ENCODE measurements at regions of chr13 and their contacts with region 1.

Region 1: DNA sequence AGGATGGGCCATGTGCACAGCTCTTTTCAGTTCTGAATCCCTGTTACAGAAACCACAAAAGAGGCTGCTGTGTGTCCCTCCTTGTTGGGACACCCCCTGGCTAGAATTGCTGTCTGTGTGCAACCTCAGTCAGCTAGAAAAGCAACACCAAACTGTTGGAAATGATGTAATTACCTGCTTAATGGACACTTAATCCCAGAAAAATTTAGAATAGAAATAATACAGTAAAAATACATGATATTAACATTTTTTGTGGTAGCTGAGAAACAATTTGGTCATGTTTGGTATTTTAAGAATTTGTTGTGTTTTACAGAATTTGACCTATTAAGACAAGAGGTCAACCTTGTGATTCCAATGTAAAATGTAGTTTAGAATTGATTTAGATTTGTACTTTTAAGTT is 46.8 kb downstream of the FAM124A start:
- DNase-seq: no peak
- ATAC-seq: no peak
- H3K4me3 ChIP-seq: no peak overlapping the region
- H3K27ac ChIP-seq: no peak overlapping the region
- H3K4me1 ChIP-seq: peaks cover 6 to 9% of the 10 kb centered on the region in 2 donors
- H3K27me3 ChIP-seq: no peaks in the 10 kb centered on the region
- CTCF ChIP-seq: no peak
- POLR2A ChIP-seq: no peak

Region 2: DNA sequence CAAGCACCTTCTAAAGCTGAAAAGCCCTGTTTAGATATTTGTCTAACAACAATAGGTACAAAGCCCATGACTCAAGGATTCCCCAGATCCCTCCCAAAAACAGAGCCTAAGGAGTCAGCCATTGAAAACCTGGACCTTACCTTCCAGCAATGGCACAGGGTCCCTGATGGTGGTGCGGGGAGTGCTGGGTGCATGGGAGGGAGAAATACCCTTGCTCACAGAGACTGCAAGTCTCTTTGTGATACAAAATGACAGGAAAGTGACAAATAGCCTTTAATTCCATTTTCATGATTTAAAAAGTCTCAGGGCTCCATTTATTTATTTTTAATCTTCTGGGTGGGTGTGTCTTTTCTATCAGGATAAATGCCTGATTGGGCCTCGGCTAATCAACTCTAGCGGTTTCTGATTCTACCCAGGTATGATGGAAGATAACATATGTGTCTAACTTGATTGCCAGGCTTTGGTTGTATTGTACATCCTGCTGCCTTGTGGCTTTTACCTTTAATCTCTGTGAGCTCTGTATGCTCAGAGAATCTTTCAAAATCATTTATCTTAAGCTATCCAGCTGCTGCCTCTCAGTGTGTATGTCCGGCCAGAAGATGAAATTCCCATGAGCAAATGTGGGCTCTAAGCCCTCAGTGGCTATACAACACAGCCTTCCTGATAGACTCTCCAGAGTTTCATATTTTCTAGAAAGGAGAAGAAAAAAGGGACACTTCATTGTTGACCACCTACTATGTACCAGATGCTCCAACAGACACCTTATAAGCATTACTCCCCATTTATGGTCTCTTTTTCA is 101.4 kb before region 1 on chr13:
- in situ Hi-C with region 1: no loop called
- intact Hi-C with region 1: no loop called
- DNase-seq: no peak
- ATAC-seq: no peak
- H3K4me3 ChIP-seq: no peak overlapping the region
- H3K27ac ChIP-seq: no peak overlapping the region
- H3K4me1 ChIP-seq: no peaks in the 10 kb centered on the region
- H3K27me3 ChIP-seq: no peaks in the 10 kb centered on the region
- CTCF ChIP-seq: no peak
- POLR2A ChIP-seq: no peak

Region 3: GRCh38 chr13:51222037-51222685 is 46.9 kb before region 1 on chr13 and contains the start of gene FAM124A:
- in situ Hi-C with region 1: no loop called
- intact Hi-C with region 1: loop called (anchors 5 kb)
- DNase-seq: no peak
- ATAC-seq: peak; percentile 65 to 74
- H3K4me3 ChIP-seq: peak within 1 kb of the TSS; percentile 57 to 79 (median 66)
- H3K27ac ChIP-seq: peak within 1 kb of the TSS in 3 of 4 donors; percentile 4 to 45 (median 31)
- H3K4me1 ChIP-seq: peaks cover 0 to 4% of the 10 kb centered on the region in 2 donors
- H3K27me3 ChIP-seq: no peaks in the 10 kb centered on the region
- CTCF ChIP-seq: peak in 4 of 5 experiments; percentile 24 to 62 (median 39)
- POLR2A ChIP-seq: peak in 1 of 2 donors; percentile 10
- total RNA-seq, gene FAM124A: 0.66 to 2.0 (median 0.81) TPM

Measured in gastrocnemius medialis (tissue), 4 donors.